WTC11 (cell line): ENCODE measurements at regions of chr6 and their contacts with region 1.

Region 1: GRCh38 chr6:43263314-43264178 is 20.3 kb downstream of the TTBK1 start:
- DNase-seq: peak; percentile 90
- ATAC-seq: peak; percentile 87
- H3K4me3 Mint-ChIP-seq: no peak overlapping the region
- H3K27ac Mint-ChIP-seq: peak overlapping the region; percentile 28; the same call in 1 of the 2 replicates
- H3K4me1 Mint-ChIP-seq: peaks cover 24% of the 10 kb centered on the region
- H3K27me3 Mint-ChIP-seq: peaks cover 14% of the 10 kb centered on the region
- CTCF ChIP-seq: peak; percentile 60; the same call in 1 of the 2 replicates

Region 2: DNA sequence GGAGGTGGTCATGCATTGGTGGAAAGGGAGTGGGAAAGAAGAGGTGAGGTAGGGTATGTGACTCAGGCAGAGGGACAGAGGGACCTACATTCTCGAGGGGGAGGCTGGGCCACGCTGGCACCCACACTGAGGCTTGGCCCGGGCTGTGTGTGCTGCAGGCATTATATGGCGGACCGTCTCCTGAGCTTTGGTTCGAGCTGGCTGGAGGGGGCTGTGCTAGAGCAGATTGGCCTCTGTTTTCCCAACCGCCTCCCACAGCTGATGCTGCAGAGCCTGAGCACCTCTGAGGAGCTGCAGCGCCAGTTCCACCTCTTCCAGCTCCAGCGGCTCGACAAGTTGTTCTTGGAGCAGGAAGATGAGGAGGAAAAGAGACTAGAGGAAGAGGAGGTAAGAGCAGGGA is 57.7 kb before region 1 on chr6:
- CTCF ChIA-PET with region 1: no interaction called
- POLR2A ChIA-PET with region 1: no interaction called
- DNase-seq: no peak
- ATAC-seq: no peak
- H3K4me3 Mint-ChIP-seq: no peak overlapping the region
- H3K27ac Mint-ChIP-seq: peak overlapping the region; percentile 29; the same call in 1 of the 2 replicates
- H3K4me1 Mint-ChIP-seq: no peaks in the 10 kb centered on the region
- H3K27me3 Mint-ChIP-seq: no peaks in the 10 kb centered on the region; the same call in 1 of the 2 replicates
- CTCF ChIP-seq: no peak

Region 3: GRCh38 chr6:43247113-43247999 is 16.2 kb before region 1 on chr6:
- CTCF ChIA-PET with region 1: interaction called, 17 read pairs
- POLR2A ChIA-PET with region 1: no interaction called
- DNase-seq: peak; percentile 93
- ATAC-seq: peak; percentile 87
- H3K4me3 Mint-ChIP-seq: peak overlapping the region; percentile 92
- H3K27ac Mint-ChIP-seq: peak overlapping the region; percentile 97; the same call in 1 of the 2 replicates
- H3K4me1 Mint-ChIP-seq: peaks cover 27% of the 10 kb centered on the region
- H3K27me3 Mint-ChIP-seq: peaks cover 23% of the 10 kb centered on the region
- CTCF ChIP-seq: no peak

Region 4: DNA sequence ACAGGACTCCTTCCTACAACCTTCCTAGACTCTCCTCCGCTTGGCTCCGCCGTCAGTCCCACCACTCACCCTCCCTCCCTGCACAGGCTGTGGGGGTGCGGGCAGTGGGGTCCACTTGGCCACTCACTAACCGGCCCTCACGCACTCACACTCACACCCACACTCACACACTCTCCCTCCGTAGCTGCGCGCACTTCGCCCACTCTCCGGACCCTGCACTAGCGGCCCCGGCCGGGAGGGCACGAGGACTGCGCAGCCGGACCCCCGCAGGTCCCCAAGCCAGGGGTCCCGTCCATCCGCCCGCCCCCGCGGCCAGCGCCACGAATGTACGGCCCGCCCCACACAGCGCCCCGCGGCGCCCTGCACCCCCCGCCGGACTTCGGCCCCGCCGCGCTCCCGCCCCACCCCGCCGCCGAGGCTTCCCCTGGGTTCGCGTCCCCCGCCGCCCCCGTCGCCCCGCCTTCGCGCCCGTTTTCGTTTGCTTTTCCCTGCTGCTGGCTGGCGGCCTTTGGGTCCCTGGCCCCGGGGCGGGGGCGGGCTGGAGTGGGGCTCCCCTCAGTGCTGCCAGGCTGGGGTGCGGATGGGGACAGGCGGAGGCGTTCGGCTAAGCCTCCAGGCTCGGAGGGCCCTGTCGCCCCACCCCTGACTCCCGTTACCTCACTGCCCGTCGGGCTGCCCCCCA is 11.5 kb after region 1 on chr6:
- CTCF ChIA-PET with region 1: interaction called, 18 read pairs
- POLR2A ChIA-PET with region 1: no interaction called
- DNase-seq: no peak
- ATAC-seq: peak; percentile 7
- H3K4me3 Mint-ChIP-seq: peak overlapping the region; percentile 84
- H3K27ac Mint-ChIP-seq: no peak overlapping the region
- H3K4me1 Mint-ChIP-seq: peaks cover 40% of the 10 kb centered on the region
- H3K27me3 Mint-ChIP-seq: peaks cover 73% of the 10 kb centered on the region
- CTCF ChIP-seq: no peak